ENCODE measurements at regions of chr2 and their contacts with region 1.

Region 1: GRCh38 chr2:68169297-68169696 is 11.6 kb downstream of the PNO1 start:
- DNase-seq: no peak
- ATAC-seq: no peak
- H3K4me3 ChIP-seq: no peak overlapping the region
- H3K27ac ChIP-seq: no peak overlapping the region
- H3K4me1 ChIP-seq: no peaks in the 10 kb centered on the region
- H3K27me3 ChIP-seq: no peaks in the 10 kb centered on the region
- CTCF ChIP-seq: no peak

Region 2: GRCh38 chr2:68083346-68083745 is 86.0 kb before region 1 on chr2:
- CTCF ChIA-PET with region 1: no interaction called
- POLR2A ChIA-PET with region 1: interaction called, 11 read pairs
- in situ Hi-C with region 1: no loop called
- intact Hi-C with region 1: no loop called
- DNase-seq: no peak
- ATAC-seq: no peak
- H3K4me3 ChIP-seq: no peak overlapping the region
- H3K27ac ChIP-seq: no peak overlapping the region
- H3K4me1 ChIP-seq: no peaks in the 10 kb centered on the region
- H3K27me3 ChIP-seq: peaks cover 2% of the 10 kb centered on the region
- CTCF ChIP-seq: no peak

Region 3: GRCh38 chr2:68689553-68690537 is 520.5 kb after region 1 on chr2:
- CTCF ChIA-PET with region 1: no interaction called
- POLR2A ChIA-PET with region 1: no interaction called
- in situ Hi-C with region 1: no loop called
- intact Hi-C with region 1: no loop called
- DNase-seq: no peak
- ATAC-seq: no peak
- H3K4me3 ChIP-seq: no peak overlapping the region
- H3K27ac ChIP-seq: no peak overlapping the region
- H3K4me1 ChIP-seq: no peaks in the 10 kb centered on the region
- H3K27me3 ChIP-seq: no peaks in the 10 kb centered on the region; the same call in 1 of the 2 replicates
- CTCF ChIP-seq: no peak